H1 (cell line): ENCODE measurements at regions of chr3 and their contacts with region 1.

Region 1: GRCh38 chr3:52339612-52340011 is 23.5 kb downstream of the DNAH1 start:
- DNase-seq: no peak
- H3K4me3 ChIP-seq: no peak overlapping the region
- H3K27ac ChIP-seq: no peak overlapping the region
- H3K4me1 ChIP-seq: no peaks in the 10 kb centered on the region
- H3K27me3 ChIP-seq: no peaks in the 10 kb centered on the region
- CTCF ChIP-seq: peak in 2 of 3 experiments; percentile 57 to 78; a peak in 3 of 4 replicates
- EP300 ChIP-seq: no peak
- POLR2A ChIP-seq: no peak
- RAD21 ChIP-seq: peak; percentile 89

Region 2: DNA sequence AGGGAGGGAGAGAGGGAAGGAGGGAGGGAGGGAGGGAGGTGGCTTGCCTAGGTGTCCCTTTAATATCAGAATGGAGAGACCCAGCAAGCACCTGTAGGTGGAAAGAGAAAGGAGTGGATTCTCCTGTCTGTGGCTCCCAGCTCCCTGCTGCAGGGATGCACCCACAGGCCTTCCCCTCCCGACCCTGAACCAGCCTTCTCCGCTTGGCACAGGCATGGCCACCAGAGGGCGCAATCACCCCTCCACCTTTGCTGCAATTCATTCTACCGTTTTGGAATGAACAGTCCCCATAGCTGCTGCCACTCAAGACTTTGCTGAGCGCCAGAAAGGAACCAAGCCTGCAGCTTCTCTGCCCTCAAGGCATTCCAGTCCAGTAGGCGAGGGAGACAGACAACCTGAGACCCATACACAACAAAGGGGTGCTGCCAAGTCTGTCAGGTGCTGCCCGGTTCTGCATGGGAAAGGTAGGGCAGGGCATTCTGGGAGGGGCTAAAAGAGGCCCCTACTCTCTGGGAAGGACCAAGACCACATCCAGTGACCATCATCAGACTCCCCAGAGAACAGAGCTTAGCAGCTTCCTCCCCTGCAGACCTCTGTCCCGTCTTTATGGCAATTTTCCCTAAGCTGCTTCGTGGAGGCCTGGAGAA is 119.1 kb before region 1 on chr3:
- CTCF ChIA-PET with region 1: interaction called, 77 read pairs
- POLR2A ChIA-PET with region 1: no interaction called
- DNase-seq: peak in 1 of 2 experiments; percentile 96
- H3K4me3 ChIP-seq: no peak overlapping the region
- H3K27ac ChIP-seq: no peak overlapping the region
- H3K4me1 ChIP-seq: peaks cover 0 to 3% (median under 1%) of the 10 kb centered on the region in 4 experiments; a peak in 3 of 7 replicates
- H3K27me3 ChIP-seq: no peaks in the 10 kb centered on the region
- CTCF ChIP-seq: peak in 2 of 3 experiments; percentile 87 to 99; a peak in 3 of 4 replicates
- EP300 ChIP-seq: no peak
- POLR2A ChIP-seq: no peak
- RAD21 ChIP-seq: peak; percentile 78 to 81

Region 3: DNA sequence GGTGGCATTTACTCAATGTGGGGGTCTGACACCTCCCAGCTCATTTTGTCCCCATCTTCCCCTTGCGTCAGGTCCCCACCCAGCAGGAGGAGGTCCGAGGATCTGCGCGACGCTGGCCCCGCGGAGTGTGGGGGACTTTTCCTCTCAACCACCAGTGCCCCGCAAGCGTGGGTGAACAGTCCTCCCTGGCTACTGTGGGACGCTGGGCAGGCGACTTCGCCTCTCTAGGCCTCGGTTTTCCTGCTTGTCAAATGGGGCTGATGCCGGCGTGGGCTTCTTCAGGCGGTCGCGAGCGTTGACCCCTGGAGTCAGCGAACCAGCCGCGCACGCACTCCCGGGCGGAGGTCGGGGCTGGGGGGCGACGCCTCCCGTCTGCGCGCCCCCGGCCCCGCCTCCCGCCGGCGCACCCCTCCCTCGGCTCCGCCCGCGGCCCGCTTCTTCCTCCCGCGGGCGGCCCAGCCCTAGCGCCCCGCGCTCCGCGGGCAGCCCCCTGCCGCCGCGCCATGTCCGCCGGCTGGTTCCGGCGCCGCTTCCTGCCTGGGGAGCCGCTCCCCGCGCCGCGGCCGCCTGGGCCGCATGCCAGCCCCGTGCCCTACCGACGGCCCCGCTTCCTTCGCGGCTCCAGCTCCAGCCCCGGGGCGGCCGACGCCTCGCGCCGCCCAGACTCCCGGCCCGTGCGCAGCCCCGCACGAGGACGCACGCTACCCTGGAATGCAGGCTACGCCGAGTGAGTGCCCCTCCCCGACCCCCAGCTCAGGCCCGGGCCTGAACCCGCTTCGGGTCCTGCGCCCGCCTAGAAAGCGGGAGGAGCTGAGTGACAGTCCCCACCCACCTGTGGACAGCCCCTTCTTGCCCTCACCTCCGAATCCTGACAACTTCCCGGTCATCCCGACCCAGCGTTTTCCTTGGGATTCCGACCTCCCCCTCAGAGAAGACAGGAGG is 94.0 kb before region 1 on chr3 and contains the start of gene PPM1M:
- CTCF ChIA-PET with region 1: interaction called, 14 read pairs
- POLR2A ChIA-PET with region 1: no interaction called
- DNase-seq: peak in 1 of 2 experiments; percentile 83
- H3K4me3 ChIP-seq: peak within 1 kb of the TSS; percentile 32 to 58 (median 51)
- H3K27ac ChIP-seq: no peak within 1 kb of the TSS
- H3K4me1 ChIP-seq: peaks cover 5 to 18% (median 14%) of the 10 kb centered on the region in 4 experiments
- H3K27me3 ChIP-seq: peaks cover 6 to 37% (median 23%) of the 10 kb centered on the region in 4 experiments; a peak in 6 of 7 replicates
- CTCF ChIP-seq: no peak
- EP300 ChIP-seq: no peak
- POLR2A ChIP-seq: no peak
- RAD21 ChIP-seq: no peak
- total RNA-seq, gene PPM1M: 5.2 and 5.4 TPM in 2 replicates

Region 4: DNA sequence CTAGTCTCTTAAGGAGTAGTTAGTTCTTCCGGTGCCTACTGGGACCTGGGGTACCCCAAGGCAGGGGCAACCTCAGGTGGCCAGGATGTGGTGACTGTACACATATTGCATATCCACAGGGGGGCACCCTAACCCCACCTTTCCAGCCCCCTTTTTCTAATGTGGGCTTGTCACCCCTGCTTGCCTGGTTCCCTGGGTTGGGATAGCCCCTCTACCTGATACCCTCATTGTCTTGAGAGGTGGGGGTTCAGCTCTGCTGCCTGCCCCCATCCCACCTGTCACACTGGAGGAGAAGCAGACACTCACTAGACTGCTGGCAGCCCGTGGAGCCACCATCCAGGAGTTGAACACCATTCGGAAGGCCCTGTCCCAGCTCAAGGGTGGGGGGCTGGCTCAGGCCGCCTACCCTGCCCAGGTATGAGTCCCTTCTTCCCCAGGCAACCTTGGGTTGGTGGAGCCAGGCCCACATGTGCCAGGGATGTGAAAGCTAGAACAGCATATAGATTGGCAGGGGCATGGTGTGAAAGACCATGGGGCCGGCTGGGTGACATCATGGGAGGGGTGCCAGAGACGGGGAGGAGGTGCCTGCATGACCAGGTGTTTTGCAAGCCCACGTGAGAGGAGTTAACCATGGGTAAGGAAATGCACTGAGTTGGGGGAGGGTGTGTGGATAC is 48.0 kb before region 1 on chr3:
- CTCF ChIA-PET with region 1: interaction called, 134 read pairs
- POLR2A ChIA-PET with region 1: interaction called, 6 read pairs
- DNase-seq: peak in 1 of 2 experiments; percentile 80
- H3K4me3 ChIP-seq: no peak overlapping the region
- H3K27ac ChIP-seq: no peak overlapping the region
- H3K4me1 ChIP-seq: peaks cover 0 to under 1% (median 0%) of the 10 kb centered on the region in 4 experiments; a peak in 3 of 7 replicates
- H3K27me3 ChIP-seq: no peaks in the 10 kb centered on the region
- CTCF ChIP-seq: peak in 2 of 3 experiments; percentile 64 to 82; a peak in 3 of 4 replicates
- EP300 ChIP-seq: no peak
- POLR2A ChIP-seq: no peak
- RAD21 ChIP-seq: peak; percentile 89 to 92

Region 5: DNA sequence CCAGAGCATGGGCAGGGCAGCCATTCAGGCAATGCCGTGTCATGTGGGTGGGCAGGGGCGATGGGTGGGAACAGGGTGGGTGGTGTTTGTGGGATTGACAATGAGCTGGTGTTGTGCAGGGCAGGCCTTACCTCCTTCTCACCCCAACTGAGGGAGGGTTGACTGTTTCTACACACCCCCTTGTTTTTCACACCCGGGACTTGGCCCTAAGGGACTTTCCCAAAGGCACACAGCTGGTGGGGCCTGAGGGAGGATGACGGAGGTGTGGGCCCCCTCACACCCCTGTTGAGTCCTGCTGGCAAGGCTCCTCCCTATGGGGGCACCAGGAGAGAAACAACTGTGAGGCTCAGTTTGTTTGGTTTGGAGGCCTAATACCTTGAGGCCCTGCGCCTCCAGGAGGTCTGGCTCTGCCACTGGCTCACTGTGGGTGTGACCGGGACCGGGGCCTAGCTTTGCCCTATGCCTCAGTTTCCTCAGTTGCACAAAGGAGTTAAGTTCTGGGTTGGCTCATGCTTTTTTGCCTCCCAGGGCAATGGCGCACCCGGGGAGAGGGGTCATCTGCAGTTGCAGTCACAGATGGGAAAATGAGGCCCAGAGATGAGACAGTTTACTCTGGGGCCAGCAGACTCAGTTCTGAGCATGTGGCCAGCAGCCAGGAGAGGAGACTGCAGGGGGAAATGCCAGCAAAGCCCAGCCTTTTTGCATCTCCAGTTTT is 28.6 kb before region 1 on chr3:
- CTCF ChIA-PET with region 1: interaction called, 27 read pairs
- POLR2A ChIA-PET with region 1: interaction called, 3 read pairs
- DNase-seq: no peak
- H3K4me3 ChIP-seq: no peak overlapping the region
- H3K27ac ChIP-seq: no peak overlapping the region
- H3K4me1 ChIP-seq: no peaks in the 10 kb centered on the region; a peak in 1 of 7 replicates
- H3K27me3 ChIP-seq: peaks cover 0 to 3% (median 0%) of the 10 kb centered on the region in 4 experiments; a peak in 1 of 7 replicates
- CTCF ChIP-seq: no peak
- EP300 ChIP-seq: no peak
- POLR2A ChIP-seq: no peak
- RAD21 ChIP-seq: no peak

Region 6: GRCh38 chr3:52323526-52324295 is 15.9 kb before region 1 on chr3:
- CTCF ChIA-PET with region 1: interaction called, 60 read pairs
- POLR2A ChIA-PET with region 1: no interaction called
- DNase-seq: no peak
- H3K4me3 ChIP-seq: no peak overlapping the region
- H3K27ac ChIP-seq: no peak overlapping the region
- H3K4me1 ChIP-seq: no peaks in the 10 kb centered on the region
- H3K27me3 ChIP-seq: peaks cover 0 to 5% (median 4%) of the 10 kb centered on the region in 4 experiments; a peak in 4 of 7 replicates
- CTCF ChIP-seq: no peak
- EP300 ChIP-seq: no peak
- POLR2A ChIP-seq: no peak
- RAD21 ChIP-seq: no peak; a peak in 1 of 4 replicates

Region 7: GRCh38 chr3:52372822-52373504 is 33.4 kb after region 1 on chr3:
- CTCF ChIA-PET with region 1: interaction called, 165 read pairs
- POLR2A ChIA-PET with region 1: no interaction called
- DNase-seq: peak in 1 of 2 experiments; percentile 81
- H3K4me3 ChIP-seq: peak overlapping the region in 2 of 4 experiments; percentile 16 to 56; a peak in 5 of 8 replicates
- H3K27ac ChIP-seq: no peak overlapping the region
- H3K4me1 ChIP-seq: peaks cover 0 to 15% (median 5%) of the 10 kb centered on the region in 4 experiments; a peak in 4 of 7 replicates
- H3K27me3 ChIP-seq: peaks cover 0 to 1% (median 0%) of the 10 kb centered on the region in 4 experiments; a peak in 3 of 7 replicates
- CTCF ChIP-seq: peak in 1 of 3 experiments; percentile 35; a peak in 1 of 4 replicates
- EP300 ChIP-seq: no peak
- POLR2A ChIP-seq: no peak
- RAD21 ChIP-seq: no peak